ENCODE measurements at regions of chr1 and their contacts with region 1.

Region 1: GRCh38 chr1:44213222-44214112 is at the start of gene DMAP1:
- DNase-seq: peak; percentile 36 to 82
- ATAC-seq: peak; percentile 85 to 91
- H3K4me3 ChIP-seq: peak within 1 kb of the TSS; percentile 83
- H3K27ac ChIP-seq: peak within 1 kb of the TSS; percentile 91 to 95
- H3K4me1 ChIP-seq: peaks cover 13% of the 10 kb centered on the region; the same call in 1 of the 3 replicates
- CTCF ChIP-seq: no peak
- EP300 ChIP-seq: no peak
- POLR2A ChIP-seq: peak; percentile 14
- RAD21 ChIP-seq: peak; percentile 27 to 46; a peak in 3 of 5 replicates
- polyA plus RNA-seq, gene DMAP1: 28.2 and 28.7 TPM in 2 replicates

Region 2: GRCh38 chr1:43796111-43796581 is 417.3 kb before region 1 on chr1:
- CTCF ChIA-PET with region 1: no interaction called
- POLR2A ChIA-PET with region 1: no interaction called
- DNase-seq: no peak
- ATAC-seq: no peak
- H3K4me3 ChIP-seq: no peak overlapping the region
- H3K27ac ChIP-seq: no peak overlapping the region
- H3K4me1 ChIP-seq: no peaks in the 10 kb centered on the region
- CTCF ChIP-seq: no peak
- EP300 ChIP-seq: no peak
- POLR2A ChIP-seq: no peak
- RAD21 ChIP-seq: no peak

Region 3: GRCh38 chr1:44227211-44227610 is 13.7 kb after region 1 on chr1:
- CTCF ChIA-PET with region 1: interaction called, 19 read pairs
- POLR2A ChIA-PET with region 1: interaction called, 3 read pairs
- DNase-seq: peak in 1 of 2 experiments; percentile 19
- ATAC-seq: no peak
- H3K4me3 ChIP-seq: no peak overlapping the region
- H3K27ac ChIP-seq: no peak overlapping the region
- H3K4me1 ChIP-seq: no peaks in the 10 kb centered on the region
- CTCF ChIP-seq: no peak
- EP300 ChIP-seq: no peak
- POLR2A ChIP-seq: no peak
- RAD21 ChIP-seq: no peak

Region 4: DNA sequence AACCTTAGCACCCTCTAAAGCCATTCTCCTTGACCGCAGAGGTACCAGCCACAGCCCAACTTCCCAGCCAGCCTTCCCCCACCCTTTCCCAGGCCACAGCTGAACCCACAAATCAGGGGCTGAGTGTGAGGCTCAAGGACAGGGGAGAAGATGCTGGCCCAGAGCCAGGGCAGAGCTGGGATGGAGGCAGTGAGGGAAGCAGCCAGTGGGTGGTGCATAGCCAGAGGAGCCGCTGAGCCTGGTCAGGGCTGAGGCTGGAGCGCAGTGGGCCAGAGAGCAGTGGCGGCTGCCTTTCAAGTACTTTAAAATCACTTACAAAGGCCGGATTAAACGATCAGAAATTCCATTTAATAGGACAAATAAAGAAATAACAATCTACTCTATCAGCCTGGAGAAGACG is 36.1 kb after region 1 on chr1:
- CTCF ChIA-PET with region 1: interaction called, 10 read pairs
- POLR2A ChIA-PET with region 1: no interaction called
- DNase-seq: no peak
- ATAC-seq: no peak
- H3K4me3 ChIP-seq: no peak overlapping the region
- H3K27ac ChIP-seq: no peak overlapping the region
- H3K4me1 ChIP-seq: no peaks in the 10 kb centered on the region
- CTCF ChIP-seq: no peak
- EP300 ChIP-seq: no peak
- POLR2A ChIP-seq: no peak
- RAD21 ChIP-seq: no peak

Region 5: GRCh38 chr1:44318097-44319088 is 104.9 kb after region 1 on chr1:
- CTCF ChIA-PET with region 1: interaction called, 18 read pairs
- POLR2A ChIA-PET with region 1: no interaction called
- DNase-seq: peak; percentile 23 to 61
- ATAC-seq: peak in 1 of 2 experiments; percentile 68; a peak in 3 of 6 replicates
- H3K4me3 ChIP-seq: no peak overlapping the region
- H3K27ac ChIP-seq: no peak overlapping the region
- H3K4me1 ChIP-seq: no peaks in the 10 kb centered on the region
- CTCF ChIP-seq: peak; percentile 73
- EP300 ChIP-seq: no peak
- POLR2A ChIP-seq: no peak
- RAD21 ChIP-seq: peak; percentile 48 to 54; a peak in 3 of 5 replicates